Endothelial cell of umbilical vein (primary cell): ENCODE measurements at regions of chr1 and their contacts with region 1.

Region 1: GRCh38 chr1:28248283-28249012 is 10.9 kb upstream of the SESN2 start:
- DNase-seq: peak; percentile 85
- H3K4me3 ChIP-seq: peak overlapping the region in 1 of 3 experiments; percentile 10
- H3K27ac ChIP-seq: peak overlapping the region; percentile 22
- H3K4me1 ChIP-seq: peaks cover 25% of the 10 kb centered on the region
- H3K27me3 ChIP-seq: no peaks in the 10 kb centered on the region
- CTCF ChIP-seq: peak; percentile 91 to 96
- POLR2A ChIP-seq: no peak

Region 2: GRCh38 chr1:28266920-28267322 is 18.5 kb after region 1 on chr1:
- CTCF ChIA-PET with region 1: interaction called, 73 read pairs
- POLR2A ChIA-PET with region 1: no interaction called
- dilution Hi-C with region 1: no loop called
- intact Hi-C with region 1: no loop called
- DNase-seq: no peak
- H3K4me3 ChIP-seq: no peak overlapping the region
- H3K27ac ChIP-seq: no peak overlapping the region
- H3K4me1 ChIP-seq: no peaks in the 10 kb centered on the region
- H3K27me3 ChIP-seq: no peaks in the 10 kb centered on the region
- CTCF ChIP-seq: no peak
- POLR2A ChIP-seq: no peak

Region 3: DNA sequence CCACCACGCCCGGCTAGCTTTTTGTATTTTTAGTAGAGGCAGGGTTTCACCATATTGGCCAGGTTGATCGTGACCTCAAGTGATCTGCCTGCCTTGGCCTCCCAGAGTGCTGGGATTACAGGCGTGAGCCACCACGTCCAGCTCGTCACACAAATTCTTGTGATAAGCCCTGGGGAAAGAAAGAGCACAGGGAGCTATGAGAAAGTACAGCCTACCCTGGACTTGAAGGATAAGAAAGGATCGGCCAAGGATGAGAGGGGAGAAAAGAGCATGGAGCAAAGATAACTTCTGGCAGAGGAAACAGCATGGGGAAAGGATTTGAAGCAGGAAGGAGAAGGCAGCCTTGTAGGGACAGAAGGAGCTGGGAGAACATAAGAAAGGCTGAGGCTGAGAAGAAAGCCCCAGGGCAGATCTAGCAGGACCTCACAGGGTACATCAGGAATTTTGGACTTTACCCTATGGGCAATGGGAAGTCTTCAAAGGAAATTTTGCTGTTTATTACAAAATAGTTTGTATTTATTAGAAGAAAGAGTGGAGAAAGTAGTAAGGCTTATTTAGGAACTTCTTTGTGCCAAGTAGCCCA is 40.1 kb after region 1 on chr1:
- CTCF ChIA-PET with region 1: interaction called, 16 read pairs
- POLR2A ChIA-PET with region 1: no interaction called
- dilution Hi-C with region 1: no loop called
- intact Hi-C with region 1: no loop called
- DNase-seq: no peak
- H3K4me3 ChIP-seq: no peak overlapping the region
- H3K27ac ChIP-seq: no peak overlapping the region
- H3K4me1 ChIP-seq: no peaks in the 10 kb centered on the region
- H3K27me3 ChIP-seq: no peaks in the 10 kb centered on the region
- CTCF ChIP-seq: no peak
- POLR2A ChIP-seq: no peak

Region 4: GRCh38 chr1:28359592-28360239 is 111.3 kb after region 1 on chr1:
- CTCF ChIA-PET with region 1: interaction called, 37 read pairs
- POLR2A ChIA-PET with region 1: no interaction called
- dilution Hi-C with region 1: no loop called
- intact Hi-C with region 1: loop called (anchors 2 kb)
- DNase-seq: peak; percentile 73
- H3K4me3 ChIP-seq: no peak overlapping the region
- H3K27ac ChIP-seq: no peak overlapping the region
- H3K4me1 ChIP-seq: no peaks in the 10 kb centered on the region
- H3K27me3 ChIP-seq: no peaks in the 10 kb centered on the region
- CTCF ChIP-seq: peak; percentile 56 to 64
- POLR2A ChIP-seq: no peak

Region 5: DNA sequence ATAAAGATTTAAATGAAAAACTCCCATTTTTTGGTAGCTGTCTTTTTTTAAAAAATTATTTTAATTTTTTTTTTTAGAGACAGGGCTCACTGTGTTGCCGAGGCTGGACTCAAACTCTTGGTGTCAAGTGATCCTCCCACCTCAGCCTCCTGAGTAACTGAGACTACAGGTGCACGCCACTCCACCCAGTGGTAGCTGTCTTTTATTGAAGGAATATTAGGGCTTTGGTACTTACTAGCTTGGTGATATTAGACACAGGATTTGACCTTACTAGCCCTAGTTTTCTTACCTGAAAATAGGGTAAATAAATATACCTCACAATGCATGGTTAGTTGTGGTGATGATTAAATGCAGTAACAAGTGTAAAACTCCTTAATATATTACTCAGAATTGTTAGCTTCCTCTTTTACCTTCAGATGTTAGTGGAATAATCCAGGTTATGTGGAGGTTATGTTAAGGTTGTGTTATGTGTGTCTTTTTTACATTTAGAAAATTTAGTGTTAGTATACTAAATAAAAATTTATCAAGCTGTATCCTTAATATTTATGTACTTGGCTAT is 187.8 kb after region 1 on chr1:
- CTCF ChIA-PET with region 1: no interaction called
- POLR2A ChIA-PET with region 1: no interaction called
- dilution Hi-C with region 1: no loop called
- intact Hi-C with region 1: no loop called
- DNase-seq: no peak
- H3K4me3 ChIP-seq: no peak overlapping the region
- H3K27ac ChIP-seq: no peak overlapping the region
- H3K4me1 ChIP-seq: peaks cover 27% of the 10 kb centered on the region
- H3K27me3 ChIP-seq: no peaks in the 10 kb centered on the region
- CTCF ChIP-seq: no peak
- POLR2A ChIP-seq: no peak

Region 6: DNA sequence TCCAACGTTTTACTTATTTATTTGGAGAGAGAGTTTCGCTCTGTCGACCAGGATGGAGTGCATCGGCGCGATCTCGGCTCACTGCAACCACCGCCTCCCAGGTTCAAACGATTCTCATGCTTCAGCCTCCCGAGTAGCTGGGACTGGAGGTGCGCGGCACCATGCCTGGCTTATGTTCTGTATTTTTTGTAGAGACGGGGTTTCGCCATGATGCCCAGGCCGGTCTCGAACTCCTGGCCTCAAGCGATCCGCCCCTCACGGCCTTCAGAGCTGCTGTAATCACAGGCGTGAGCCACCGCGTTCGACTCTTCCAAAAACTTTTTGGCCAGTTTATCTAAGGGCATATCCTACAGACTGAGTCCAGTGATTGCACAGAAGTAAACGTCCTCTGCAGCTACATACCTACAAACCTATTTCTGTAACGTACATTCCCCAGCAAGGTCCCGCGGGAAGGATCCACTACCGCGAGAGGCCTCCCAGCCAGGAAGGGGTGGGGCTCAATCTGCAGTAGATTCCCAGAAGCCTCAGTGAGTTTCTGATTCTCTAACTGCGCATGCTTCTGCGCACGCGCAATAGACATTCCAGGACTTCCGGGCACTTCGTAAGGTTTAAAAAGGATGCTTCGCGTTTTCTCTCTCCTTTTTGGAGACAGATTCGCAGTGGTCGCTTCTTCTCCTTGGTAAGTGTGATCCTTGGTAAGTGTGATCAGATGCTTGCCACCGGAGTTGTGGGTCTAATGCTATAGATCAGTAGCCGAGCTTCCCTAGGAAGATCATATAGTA is 257.1 kb after region 1 on chr1 and contains the start of gene RCC1:
- CTCF ChIA-PET with region 1: interaction called, 6 read pairs
- POLR2A ChIA-PET with region 1: interaction called, 3 read pairs
- dilution Hi-C with region 1: no loop called
- intact Hi-C with region 1: loop called (anchors 1 kb)
- DNase-seq: peak; percentile 100
- H3K4me3 ChIP-seq: peak within 1 kb of the TSS; percentile 58 to 100 (median 87)
- H3K27ac ChIP-seq: peak within 1 kb of the TSS; percentile 78
- H3K4me1 ChIP-seq: peaks cover 29% of the 10 kb centered on the region
- H3K27me3 ChIP-seq: no peaks in the 10 kb centered on the region
- CTCF ChIP-seq: no peak
- POLR2A ChIP-seq: peak; percentile 100
- total RNA-seq, gene RCC1: 72.7 and 77.7 TPM in 2 replicates